OCI-LY7 (cell line): ENCODE measurements at regions of chr3 and their contacts with region 1.

Region 1: GRCh38 chr3:102229062-102229655 is 205.7 kb upstream of the ZPLD1 start:
- DNase-seq: peak; percentile 85
- H3K4me3 ChIP-seq: no peak overlapping the region
- H3K27ac ChIP-seq: peak overlapping the region; percentile 72
- H3K4me1 ChIP-seq: peaks cover 41% of the 10 kb centered on the region
- CTCF ChIP-seq: peak; percentile 98

Region 2: GRCh38 chr3:101573449-101574387 is 655.4 kb before region 1 on chr3 and contains the start of gene PCNP:
- CTCF ChIA-PET with region 1: no interaction called
- POLR2A ChIA-PET with region 1: interaction called, 4 read pairs
- intact Hi-C with region 1: loop called (anchors 10 kb)
- DNase-seq: peak; percentile 99
- H3K4me3 ChIP-seq: peak within 1 kb of the TSS; percentile 92
- H3K27ac ChIP-seq: peak within 1 kb of the TSS; percentile 76
- H3K4me1 ChIP-seq: peaks cover 36% of the 10 kb centered on the region
- CTCF ChIP-seq: peak; percentile 96
- total RNA-seq, gene PCNP: 49.2 and 63.3 TPM in 2 replicates

Region 3: GRCh38 chr3:101809178-101810021 is 419.8 kb before region 1 on chr3:
- CTCF ChIA-PET with region 1: interaction called, 9 read pairs
- POLR2A ChIA-PET with region 1: interaction called, 8 read pairs
- intact Hi-C with region 1: loop called (anchors 1 kb)
- DNase-seq: peak; percentile 65
- H3K4me3 ChIP-seq: no peak overlapping the region
- H3K27ac ChIP-seq: no peak overlapping the region
- H3K4me1 ChIP-seq: peaks cover 20% of the 10 kb centered on the region
- CTCF ChIP-seq: peak; percentile 94

Region 4: GRCh38 chr3:101936419-101937356 is 292.5 kb before region 1 on chr3:
- CTCF ChIA-PET with region 1: interaction called, 5 read pairs
- POLR2A ChIA-PET with region 1: interaction called, 3 read pairs
- intact Hi-C with region 1: loop called (anchors 5 kb)
- DNase-seq: peak; percentile 70
- H3K4me3 ChIP-seq: peak overlapping the region; percentile 34
- H3K27ac ChIP-seq: peak overlapping the region; percentile 61
- H3K4me1 ChIP-seq: peaks cover 72% of the 10 kb centered on the region
- CTCF ChIP-seq: no peak

Region 5: GRCh38 chr3:101976473-101976872 is 252.7 kb before region 1 on chr3:
- CTCF ChIA-PET with region 1: no interaction called
- POLR2A ChIA-PET with region 1: no interaction called
- intact Hi-C with region 1: no loop called
- DNase-seq: no peak
- H3K4me3 ChIP-seq: no peak overlapping the region
- H3K27ac ChIP-seq: no peak overlapping the region
- H3K4me1 ChIP-seq: peaks cover 7% of the 10 kb centered on the region
- CTCF ChIP-seq: no peak

Region 6: GRCh38 chr3:101995371-101996046 is 233.7 kb before region 1 on chr3:
- CTCF ChIA-PET with region 1: no interaction called
- POLR2A ChIA-PET with region 1: no interaction called
- intact Hi-C with region 1: loop called (anchors 10 kb)
- DNase-seq: no peak
- H3K4me3 ChIP-seq: no peak overlapping the region
- H3K27ac ChIP-seq: no peak overlapping the region
- H3K4me1 ChIP-seq: peaks cover 25% of the 10 kb centered on the region
- CTCF ChIP-seq: no peak

Region 7: DNA sequence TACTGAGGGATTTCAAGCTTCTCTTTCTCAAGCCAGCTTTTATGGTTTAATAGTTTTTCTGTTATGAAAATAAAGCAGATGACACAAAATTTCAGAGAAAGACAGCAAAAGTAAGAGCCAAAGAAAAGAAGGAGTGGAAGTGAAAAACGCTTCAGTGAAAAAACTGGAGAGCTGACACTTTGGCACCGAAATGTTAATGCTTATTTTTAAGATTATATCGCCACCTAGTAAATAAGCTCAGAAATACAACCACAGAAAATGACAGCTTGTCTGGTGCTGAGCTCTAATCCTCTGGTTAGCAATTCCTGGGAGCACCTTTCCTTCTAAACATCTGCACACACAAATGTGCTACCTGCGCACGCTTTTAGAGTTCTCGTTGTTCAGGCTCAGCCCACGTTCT is 307.3 kb after region 1 on chr3:
- CTCF ChIA-PET with region 1: interaction called, 40 read pairs
- POLR2A ChIA-PET with region 1: interaction called, 28 read pairs
- intact Hi-C with region 1: loop called (anchors 1 kb)
- DNase-seq: peak; percentile 58
- H3K4me3 ChIP-seq: no peak overlapping the region
- H3K27ac ChIP-seq: no peak overlapping the region
- H3K4me1 ChIP-seq: peaks cover 8% of the 10 kb centered on the region
- CTCF ChIP-seq: peak; percentile 83

Region 8: GRCh38 chr3:102673271-102674115 is 444.3 kb after region 1 on chr3:
- CTCF ChIA-PET with region 1: no interaction called
- POLR2A ChIA-PET with region 1: no interaction called
- intact Hi-C with region 1: loop called (anchors 1 kb)
- DNase-seq: peak; percentile 57
- H3K4me3 ChIP-seq: no peak overlapping the region
- H3K27ac ChIP-seq: no peak overlapping the region
- H3K4me1 ChIP-seq: no peaks in the 10 kb centered on the region
- CTCF ChIP-seq: peak; percentile 90

Region 9: DNA sequence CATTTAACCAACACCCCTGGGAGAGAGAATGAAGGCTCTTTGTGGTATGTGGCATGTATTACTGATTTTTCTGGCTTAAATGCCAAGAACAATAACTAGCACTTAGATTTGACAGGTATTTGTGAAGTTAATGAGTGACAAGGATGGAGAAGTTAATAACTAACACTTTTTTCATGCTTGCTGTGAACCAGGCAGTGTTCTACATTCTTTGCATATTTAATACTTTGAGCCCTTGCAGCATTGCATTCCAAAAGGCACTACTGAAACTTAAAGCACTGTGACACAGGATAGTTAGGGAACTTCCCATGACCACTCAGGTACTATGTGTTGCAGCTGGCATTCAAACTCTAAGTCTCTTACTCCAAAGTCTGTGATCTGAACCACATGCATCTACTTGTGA is 856.3 kb after region 1 on chr3:
- CTCF ChIA-PET with region 1: no interaction called
- POLR2A ChIA-PET with region 1: no interaction called
- intact Hi-C with region 1: no loop called
- DNase-seq: no peak
- H3K4me3 ChIP-seq: no peak overlapping the region
- H3K27ac ChIP-seq: no peak overlapping the region
- H3K4me1 ChIP-seq: no peaks in the 10 kb centered on the region
- CTCF ChIP-seq: no peak